BJ (cell line): ENCODE measurements at regions of chr11 and their contacts with region 1.

Region 1: DNA sequence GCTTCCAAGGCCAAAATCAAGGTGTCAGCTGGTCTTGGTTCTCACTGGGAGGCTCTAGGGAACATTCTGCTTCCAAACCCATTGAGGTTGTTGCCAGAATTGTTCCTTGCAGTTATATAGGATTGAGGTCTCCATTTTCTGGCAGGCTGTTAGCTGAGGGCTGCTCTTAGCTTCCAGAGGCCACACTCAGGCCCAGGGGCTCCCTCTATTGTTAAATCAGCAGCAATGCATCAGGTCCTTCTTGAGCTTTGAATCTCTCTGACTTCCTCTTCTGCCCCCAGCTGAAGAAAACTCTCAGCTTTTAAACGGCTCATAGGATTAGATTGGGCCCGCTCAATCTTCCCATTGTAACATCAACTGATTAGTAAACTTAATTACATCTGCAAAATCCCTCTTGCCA is 39.3 kb upstream of the BSX start:
- DNase-seq: no peak
- H3K4me3 ChIP-seq: no peak overlapping the region
- H3K27me3 ChIP-seq: peaks cover 4% of the 10 kb centered on the region
- CTCF ChIP-seq: peak; percentile 81

Region 2: DNA sequence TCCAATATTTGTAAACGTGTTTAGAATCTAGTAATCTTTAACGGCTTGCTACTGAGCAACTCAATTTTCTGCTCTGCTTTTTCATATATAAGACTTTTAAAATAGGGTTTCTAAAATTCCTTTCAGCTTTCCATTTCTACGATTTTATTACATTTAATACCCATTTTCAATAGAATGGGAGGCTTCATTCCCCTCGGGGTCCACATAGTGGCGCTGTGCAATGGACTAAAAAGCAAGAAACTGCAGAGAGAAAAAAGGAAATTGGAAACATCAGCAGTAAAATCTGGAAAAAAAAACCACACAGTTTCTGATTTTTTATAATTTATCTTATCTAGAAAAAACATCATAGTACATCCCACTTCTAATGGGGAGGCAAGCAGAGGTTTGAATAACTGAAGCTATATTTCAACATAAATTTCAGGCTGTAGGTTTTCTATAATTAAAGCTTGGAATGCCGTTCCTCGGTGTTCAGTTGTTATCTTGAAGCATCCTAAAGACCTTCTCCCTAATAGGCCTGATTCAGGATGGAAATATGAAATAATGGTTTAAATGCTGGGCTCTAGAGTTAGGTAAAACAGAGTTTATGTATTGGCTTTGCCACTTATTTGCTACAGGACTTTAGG is 157.2 kb before region 1 on chr11:
- CTCF ChIA-PET with region 1: interaction called, 321 read pairs
- POLR2A ChIA-PET with region 1: interaction called, 3 read pairs
- DNase-seq: no peak
- H3K4me3 ChIP-seq: no peak overlapping the region
- H3K27me3 ChIP-seq: peaks cover 4% of the 10 kb centered on the region
- CTCF ChIP-seq: peak; percentile 91

Region 3: DNA sequence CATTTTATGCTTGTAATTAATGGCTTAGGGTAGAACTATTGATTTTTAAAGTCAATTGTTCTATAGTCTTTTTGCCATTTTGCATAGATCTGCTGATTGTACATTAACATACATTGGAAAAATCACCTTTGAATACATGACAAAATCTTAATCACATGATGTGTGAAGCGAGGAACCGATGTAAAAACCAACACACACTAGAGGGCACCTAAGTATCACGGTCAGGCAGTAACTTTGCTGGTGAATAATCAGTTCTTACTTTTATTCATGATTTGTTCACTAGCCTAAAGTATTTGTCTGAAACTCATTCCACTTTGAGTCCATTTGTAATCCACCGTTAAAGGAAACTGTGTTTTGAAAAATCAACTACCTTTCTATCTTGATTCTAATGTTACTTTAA is 110.2 kb before region 1 on chr11:
- CTCF ChIA-PET with region 1: interaction called, 10 read pairs
- POLR2A ChIA-PET with region 1: no interaction called
- DNase-seq: no peak
- H3K4me3 ChIP-seq: no peak overlapping the region
- H3K27me3 ChIP-seq: no peaks in the 10 kb centered on the region
- CTCF ChIP-seq: peak; percentile 35; the same call in 1 of the 2 replicates

Region 4: DNA sequence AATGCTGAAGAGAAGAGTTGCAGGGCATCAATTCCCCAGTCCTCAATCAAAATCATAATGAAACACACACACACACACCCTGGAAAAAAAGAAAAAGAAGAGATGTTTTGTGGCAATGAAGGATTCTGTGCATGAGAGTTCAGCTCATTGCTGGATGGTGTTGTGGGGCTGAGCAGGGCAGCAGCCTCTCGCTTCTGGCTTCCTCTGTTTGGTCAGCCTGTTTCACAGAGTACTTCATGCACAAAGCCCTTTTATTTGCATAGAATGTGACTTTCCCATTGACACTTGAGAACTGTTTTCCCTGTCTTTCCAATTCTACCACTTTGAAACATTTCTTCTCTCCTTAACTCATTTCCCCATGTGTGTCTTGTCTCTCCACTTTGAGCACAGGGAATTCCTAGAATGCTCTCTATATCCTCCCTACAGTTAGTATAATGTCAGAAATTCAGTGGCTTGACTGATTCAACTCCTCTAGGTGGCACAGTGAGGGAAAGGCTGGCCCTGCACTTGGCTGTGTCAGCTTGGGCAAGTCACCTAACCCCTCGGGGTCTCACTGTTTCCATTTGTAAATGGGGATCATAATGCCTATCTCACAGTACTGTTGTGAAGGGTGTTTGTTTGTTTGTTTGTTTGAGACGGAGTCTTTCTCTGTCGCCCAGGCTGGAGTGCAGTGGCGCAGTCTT is 14.0 kb before region 1 on chr11:
- CTCF ChIA-PET with region 1: interaction called, 11 read pairs
- POLR2A ChIA-PET with region 1: no interaction called
- DNase-seq: no peak
- H3K4me3 ChIP-seq: no peak overlapping the region
- H3K27me3 ChIP-seq: peaks cover 2% of the 10 kb centered on the region; the same call in 1 of the 2 replicates
- CTCF ChIP-seq: no peak

Region 5: DNA sequence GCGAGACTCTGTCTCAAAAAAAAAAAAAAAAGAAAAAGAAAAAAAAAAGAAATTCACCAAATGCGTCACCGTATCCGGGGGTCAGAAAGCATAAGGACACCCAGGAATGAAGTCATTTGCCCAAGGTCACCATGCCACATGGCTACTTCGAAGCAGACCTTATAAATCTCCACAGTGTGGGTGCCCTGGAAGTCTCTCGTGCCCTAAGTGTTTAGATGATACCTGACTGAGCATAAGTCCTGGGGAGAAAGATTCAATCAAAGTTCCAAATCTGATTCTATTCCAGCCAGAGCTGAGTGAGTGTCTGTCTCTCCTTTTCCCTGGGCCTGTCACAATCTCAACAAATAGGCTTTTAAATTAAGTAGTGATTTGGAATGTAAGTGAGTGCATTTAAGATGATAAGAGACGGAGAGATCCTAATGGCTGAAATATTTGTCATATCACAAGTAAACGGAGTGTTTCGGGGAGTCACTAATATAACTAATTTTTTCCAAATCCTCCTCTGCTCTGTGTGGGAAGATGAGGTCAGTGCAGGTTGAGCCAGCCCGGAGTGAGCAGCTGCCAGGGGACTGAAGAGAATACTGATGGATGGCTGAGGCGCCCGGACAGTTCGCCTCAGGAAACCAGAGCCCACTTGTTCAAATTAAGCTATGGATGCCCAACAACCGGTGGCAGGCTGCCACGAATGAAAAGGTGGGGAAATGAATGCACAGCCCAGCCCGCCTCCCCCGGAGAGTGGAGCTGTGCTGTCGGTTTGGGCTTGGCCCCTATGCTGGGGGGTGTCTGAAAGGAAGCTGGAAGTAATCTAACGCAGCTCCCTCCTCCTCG is 18.9 kb after region 1 on chr11:
- CTCF ChIA-PET with region 1: interaction called, 26 read pairs
- POLR2A ChIA-PET with region 1: no interaction called
- DNase-seq: no peak
- H3K4me3 ChIP-seq: no peak overlapping the region
- H3K27me3 ChIP-seq: no peaks in the 10 kb centered on the region
- CTCF ChIP-seq: no peak

Region 6: DNA sequence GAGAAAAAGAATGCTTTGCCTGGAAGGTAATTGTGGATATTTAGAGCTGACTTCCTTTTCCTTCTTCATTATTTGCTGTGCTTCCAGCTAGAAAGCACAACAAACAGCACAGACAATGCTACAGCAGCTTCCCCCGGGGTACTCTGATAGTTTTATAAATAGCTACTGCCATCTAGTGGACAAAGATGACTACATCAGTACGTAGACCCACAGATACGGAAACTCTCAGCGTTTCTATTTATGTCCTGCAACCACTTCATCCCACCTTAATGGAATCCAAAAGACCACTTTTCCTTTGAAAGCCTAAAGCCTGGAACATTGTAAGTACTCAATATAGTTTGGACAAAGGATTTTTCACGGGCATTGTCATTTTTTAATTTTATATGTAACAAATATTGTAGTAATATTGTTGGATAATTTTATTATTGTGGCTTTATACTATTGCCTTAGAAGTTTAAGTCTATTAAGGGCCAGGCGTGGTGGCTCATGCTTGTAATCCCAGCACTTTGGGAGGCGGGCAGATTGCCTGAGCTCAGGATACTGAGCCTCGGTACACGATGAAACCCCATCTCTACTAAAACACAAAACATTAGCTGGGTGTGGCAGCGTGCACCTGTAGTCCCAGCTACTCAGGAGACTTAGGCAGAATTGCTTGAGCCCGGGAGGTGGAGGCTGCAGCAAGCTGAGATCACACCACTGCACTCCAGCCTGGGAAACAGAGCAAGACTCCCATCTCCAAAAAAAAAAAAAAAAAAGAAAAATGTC is 33.5 kb after region 1 on chr11:
- CTCF ChIA-PET with region 1: interaction called, 30 read pairs
- POLR2A ChIA-PET with region 1: no interaction called
- DNase-seq: no peak
- H3K4me3 ChIP-seq: no peak overlapping the region
- H3K27me3 ChIP-seq: no peaks in the 10 kb centered on the region
- CTCF ChIP-seq: peak; percentile 63